A549 (cell line): ENCODE measurements at regions of chr10 and their contacts with region 1.

Region 1: DNA sequence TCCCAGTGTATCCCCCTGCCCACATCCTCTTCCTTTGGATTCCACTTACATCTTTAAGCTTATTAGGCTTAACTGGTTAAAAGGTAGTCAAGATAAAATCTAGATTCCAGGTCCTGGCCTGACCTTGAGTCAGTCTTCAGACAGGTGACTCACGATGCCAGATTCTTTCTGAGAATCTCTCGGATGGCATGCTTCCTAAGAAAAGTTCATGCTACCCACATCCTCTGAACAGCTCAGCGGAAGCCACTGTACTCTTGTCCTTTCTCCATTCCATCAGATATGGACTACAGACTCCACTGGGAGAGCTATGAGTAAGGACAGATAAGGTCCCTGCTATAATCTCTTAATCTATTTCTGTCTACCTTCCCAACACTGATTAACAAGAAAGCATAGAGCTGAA is 43.4 kb downstream of the DNMBP start:
- DNase-seq: peak; percentile 64 to 72
- ATAC-seq: peak; percentile 90 to 91
- H3K4me3 ChIP-seq: no peak overlapping the region
- H3K27ac ChIP-seq: peak overlapping the region; percentile 62 to 84
- H3K4me1 ChIP-seq: peaks cover 47% of the 10 kb centered on the region
- CTCF ChIP-seq: no peak
- EP300 ChIP-seq: peak; percentile 39 to 62; a peak in 2 of 5 replicates
- POLR2A ChIP-seq: no peak
- RAD21 ChIP-seq: peak; percentile 14 to 25; a peak in 1 of 5 replicates

Region 2: DNA sequence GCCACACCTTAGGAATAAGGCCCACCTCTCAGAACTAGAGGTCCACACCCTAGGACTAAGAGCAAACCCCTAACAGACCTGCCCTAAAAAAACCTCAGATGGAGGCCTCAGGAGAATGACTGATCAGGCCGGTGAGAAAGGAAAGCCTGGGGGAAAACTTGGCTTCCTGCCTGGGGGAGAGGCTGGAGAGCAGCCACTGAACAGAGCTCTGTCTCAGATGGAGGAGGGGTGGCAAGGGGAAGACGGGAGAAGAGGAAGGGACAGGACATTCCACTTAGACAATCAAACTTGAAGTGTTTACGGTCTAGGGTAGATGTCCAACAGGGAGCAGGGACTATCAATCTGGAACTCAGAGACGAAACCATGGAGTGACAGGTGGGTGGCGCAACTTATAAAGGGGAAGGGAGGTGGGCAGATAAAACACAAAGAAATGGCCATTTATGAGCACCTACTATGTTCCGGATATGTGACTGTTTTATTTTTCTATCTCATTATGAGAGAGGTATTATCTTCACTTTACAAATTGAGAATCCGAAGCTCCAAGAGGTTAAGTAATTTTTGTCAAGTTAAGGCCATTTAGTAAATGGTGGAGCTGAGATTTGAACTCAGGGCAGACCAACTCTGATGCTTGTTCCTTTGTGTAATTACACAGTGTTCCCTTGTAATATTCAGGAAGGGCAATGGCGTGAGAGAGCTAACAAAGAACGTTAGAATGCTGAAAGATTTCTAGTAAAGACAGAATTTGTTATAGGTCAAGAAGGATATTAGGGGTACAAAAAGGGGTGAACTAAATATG is 39.2 kb before region 1 on chr10:
- CTCF ChIA-PET with region 1: interaction called, 9 read pairs
- POLR2A ChIA-PET with region 1: interaction called, 11 read pairs
- DNase-seq: peak in 1 of 2 experiments; percentile 34
- ATAC-seq: peak in 1 of 2 experiments; percentile 23; a peak in 3 of 6 replicates
- H3K4me3 ChIP-seq: peak overlapping the region; percentile 42
- H3K27ac ChIP-seq: peak overlapping the region; percentile 84
- H3K4me1 ChIP-seq: peaks cover 70% of the 10 kb centered on the region
- CTCF ChIP-seq: no peak
- EP300 ChIP-seq: no peak
- POLR2A ChIP-seq: no peak
- RAD21 ChIP-seq: no peak

Region 3: DNA sequence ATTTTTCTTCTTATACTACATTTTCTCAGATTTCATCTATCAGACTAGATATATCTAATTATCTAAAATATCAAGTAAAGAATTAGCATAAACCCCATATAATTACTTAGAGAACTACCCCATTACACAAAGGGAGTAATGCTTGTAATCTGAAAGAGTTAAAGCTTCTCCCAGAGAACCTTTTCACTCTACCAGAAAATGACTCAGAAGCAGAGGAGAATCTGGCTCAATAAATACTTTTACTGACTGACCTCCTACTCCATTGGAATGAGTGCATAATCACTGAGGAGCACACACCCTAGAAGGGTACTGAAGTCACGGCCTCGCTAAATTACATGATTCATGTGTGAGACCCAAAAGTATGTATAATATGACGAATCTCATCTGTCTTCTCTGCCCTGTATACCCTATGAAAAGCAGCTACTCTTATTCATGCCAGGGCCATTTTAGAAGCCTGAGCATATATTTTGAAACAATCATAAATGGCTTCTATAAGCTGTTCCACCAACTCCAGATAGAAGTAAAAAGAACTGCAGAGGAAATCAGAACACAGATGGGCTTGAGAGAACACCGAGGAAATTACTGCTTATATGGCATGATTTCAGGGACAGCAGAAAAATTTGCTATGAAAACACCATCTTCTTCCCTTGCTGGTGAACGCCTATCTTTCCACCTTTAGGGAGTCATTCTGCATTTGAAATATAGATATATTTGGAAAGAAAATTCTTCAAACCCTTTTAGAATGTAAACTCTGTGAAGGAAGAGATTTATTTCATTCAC is 10.8 kb after region 1 on chr10:
- CTCF ChIA-PET with region 1: interaction called, 11 read pairs
- POLR2A ChIA-PET with region 1: interaction called, 3 read pairs
- DNase-seq: peak; percentile 55 to 82
- ATAC-seq: peak; percentile 91 to 95
- H3K4me3 ChIP-seq: peak overlapping the region; percentile 2; the same call in 1 of the 3 replicates
- H3K27ac ChIP-seq: peak overlapping the region; percentile 60 to 74
- H3K4me1 ChIP-seq: peaks cover 64% of the 10 kb centered on the region
- CTCF ChIP-seq: no peak
- EP300 ChIP-seq: no peak; a peak in 1 of 5 replicates
- POLR2A ChIP-seq: no peak
- RAD21 ChIP-seq: peak in 1 of 2 experiments; percentile 19; a peak in 1 of 5 replicates